Posterior cingulate gyrus (tissue), 11 donors: ENCODE measurements at regions of chr17 and their contacts with region 1.

Region 1: GRCh38 chr17:48618256-48618897 is 3.3 kb upstream of the HOXB8 start:
- DNase-seq: peak; percentile 81 to 98 (median 88)

Region 2: DNA sequence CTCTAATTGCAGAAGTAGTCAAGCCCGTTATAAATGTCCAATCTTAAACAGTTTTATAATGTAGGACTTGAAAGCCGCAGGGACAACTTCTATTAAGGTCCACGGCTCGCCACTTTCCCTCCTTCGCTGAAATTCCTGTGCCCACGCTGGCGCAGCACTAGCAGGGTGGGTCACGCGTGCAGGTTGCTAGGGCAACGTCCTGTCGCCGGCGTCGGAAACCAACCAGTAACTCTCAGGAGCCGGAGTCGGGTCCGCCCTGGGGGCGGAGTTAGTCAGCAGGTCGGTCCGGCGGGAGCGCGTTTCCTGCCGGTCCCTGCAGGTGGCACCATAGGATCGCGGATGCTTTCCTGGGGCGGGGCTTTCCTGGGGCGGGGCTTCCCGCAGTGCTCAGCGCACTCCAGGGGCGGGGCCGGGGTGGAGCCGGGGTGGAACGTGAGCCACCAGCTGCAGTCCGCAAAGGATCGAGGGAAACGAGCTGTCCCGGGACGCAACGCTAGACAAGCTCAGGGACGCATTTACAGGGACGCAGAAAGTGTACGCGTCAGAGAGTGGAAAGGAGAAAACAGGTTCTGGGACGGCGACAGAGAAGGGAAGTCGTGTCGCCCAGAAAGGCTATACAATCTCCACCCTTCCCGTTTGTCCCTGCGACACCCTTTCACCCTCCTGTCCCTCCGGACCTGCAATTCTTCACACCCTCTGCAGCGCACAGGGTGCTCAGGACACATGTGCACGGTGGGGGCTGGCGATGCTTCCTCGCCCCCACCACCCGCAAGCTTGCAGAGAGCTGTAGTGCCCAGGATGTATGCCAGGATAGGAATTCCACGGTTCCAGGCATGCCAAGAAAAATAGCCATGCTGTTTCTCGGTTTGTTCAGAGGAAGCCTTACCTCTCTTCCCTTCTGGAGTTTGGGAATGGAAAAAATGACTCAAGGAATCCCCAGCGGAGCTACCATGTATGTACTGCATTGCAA is 593.2 kb before region 1 on chr17:
- intact Hi-C with region 1: loop called (anchors 1 kb)
- DNase-seq: peak; percentile 97 to 100 (median 98)

Region 3: GRCh38 chr17:48307814-48308411 is 310.5 kb before region 1 on chr17:
- intact Hi-C with region 1: loop called (anchors 1 kb)
- DNase-seq: peak in 4 of 10 donors; percentile 12 to 66 (median 37)

Region 4: DNA sequence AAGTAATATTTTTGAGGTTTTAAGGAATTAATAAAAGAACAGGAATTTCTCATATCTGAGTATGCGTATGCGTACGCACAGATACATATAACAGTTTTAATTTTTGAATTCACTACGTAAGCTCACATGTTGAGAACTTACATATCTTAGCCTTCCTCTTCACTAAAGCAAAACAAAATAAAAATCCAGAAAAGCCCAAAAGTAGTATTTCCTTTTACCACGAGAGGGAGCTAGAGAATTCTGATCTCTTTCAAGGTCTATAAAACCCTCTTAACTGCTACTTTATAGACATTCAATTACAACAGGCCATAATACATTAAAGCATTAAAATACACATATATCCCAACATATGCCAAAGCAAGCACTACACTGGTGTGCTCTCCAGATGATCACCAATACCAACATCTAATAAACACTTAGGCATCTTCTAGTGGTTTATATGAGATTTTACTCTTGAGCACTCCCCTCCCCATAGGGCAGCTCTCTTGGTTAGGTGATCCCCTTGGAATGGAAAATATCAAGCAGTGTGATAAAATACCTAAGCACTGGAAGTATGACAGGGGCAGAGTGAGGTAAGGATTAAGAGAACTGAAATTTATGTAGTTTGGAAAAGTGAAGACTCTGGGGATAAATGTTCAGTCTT is 282.4 kb before region 1 on chr17:
- intact Hi-C with region 1: loop called (anchors 1 kb)
- DNase-seq: no peak

Region 5: GRCh38 chr17:48351831-48352332 is 266.5 kb before region 1 on chr17:
- intact Hi-C with region 1: loop called (anchors 5 kb)
- DNase-seq: no peak

Region 6: GRCh38 chr17:48492401-48493298 is 125.7 kb before region 1 on chr17:
- intact Hi-C with region 1: loop called (anchors 1 kb)
- DNase-seq: peak; percentile 13 to 91 (median 41)

Region 7: GRCh38 chr17:48561884-48562810 is 56.2 kb before region 1 on chr17:
- intact Hi-C with region 1: no loop called
- DNase-seq: no peak

Region 8: DNA sequence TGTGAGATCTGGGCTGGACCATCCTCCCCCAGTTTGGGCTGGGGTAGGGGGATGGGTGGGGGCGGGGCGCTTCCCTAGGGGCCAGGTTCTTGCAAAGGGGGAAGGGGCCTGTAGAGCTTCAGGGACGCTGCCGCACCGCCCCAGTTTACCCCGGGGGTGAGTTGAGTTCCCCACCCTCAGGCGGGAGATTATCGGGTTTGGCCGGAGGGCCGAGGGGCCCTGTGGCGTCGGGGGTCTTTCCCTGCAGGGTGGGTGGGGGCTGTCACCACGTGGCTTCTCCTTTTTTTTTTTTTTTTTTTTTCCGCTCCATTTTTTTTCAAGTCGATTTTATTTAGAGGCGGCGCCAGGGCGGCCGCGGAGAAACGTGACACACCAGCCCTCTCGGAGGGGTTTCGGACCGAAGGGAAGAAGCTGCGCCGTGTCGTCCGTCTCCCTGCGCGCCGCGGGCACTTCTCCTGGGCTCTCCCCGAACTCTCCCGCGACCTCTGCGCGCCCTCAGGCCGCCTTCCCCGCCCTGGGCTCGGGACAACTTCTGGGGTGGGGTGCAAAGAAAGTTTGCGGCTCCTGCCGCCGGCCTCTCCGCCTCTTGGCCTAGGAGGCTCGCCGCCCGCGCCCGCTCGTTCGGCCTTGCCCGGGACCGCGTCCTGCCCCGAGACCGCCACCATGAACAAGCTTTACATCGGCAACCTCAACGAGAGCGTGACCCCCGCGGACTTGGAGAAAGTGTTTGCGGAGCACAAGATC is 378.9 kb after region 1 on chr17 and contains the start of gene IGF2BP1:
- intact Hi-C with region 1: loop called (anchors 10 kb)
- DNase-seq: peak in 1 of 10 donors; percentile 39